ENCODE measurements at regions of chr13 and their contacts with region 1.

Region 1: GRCh38 chr13:43804461-43805070 is 17.8 kb upstream of the ENOX1 start:
- DNase-seq: peak; percentile 55
- ATAC-seq: peak; percentile 67
- H3K4me3 ChIP-seq: peak overlapping the region; percentile 23 to 36
- H3K27ac ChIP-seq: peak overlapping the region; percentile 23; the same call in 1 of the 2 replicates
- H3K4me1 ChIP-seq: peaks cover 6 to 19% of the 10 kb centered on the region in 2 experiments
- H3K27me3 ChIP-seq: no peaks in the 10 kb centered on the region
- CTCF ChIP-seq: peak in 2 of 3 experiments; percentile 46 to 62; a peak in 3 of 6 replicates
- POLR2A ChIP-seq: no peak
- RAD21 ChIP-seq: peak; percentile 65

Region 2: GRCh38 chr13:42594970-42595571 is 1209.5 kb before region 1 on chr13:
- CTCF ChIA-PET with region 1: interaction called, 6 read pairs
- POLR2A ChIA-PET with region 1: no interaction called
- RAD21 ChIA-PET with region 1: no interaction called
- intact Hi-C with region 1: loop called (anchors 1 kb)
- DNase-seq: peak; percentile 51
- ATAC-seq: peak; percentile 82
- H3K4me3 ChIP-seq: no peak overlapping the region
- H3K27ac ChIP-seq: no peak overlapping the region
- H3K4me1 ChIP-seq: no peaks in the 10 kb centered on the region
- H3K27me3 ChIP-seq: peaks cover 45% of the 10 kb centered on the region
- CTCF ChIP-seq: peak; percentile 38 to 90 (median 78); a peak in 5 of 6 replicates
- POLR2A ChIP-seq: no peak
- RAD21 ChIP-seq: peak; percentile 65

Region 3: GRCh38 chr13:42660333-42660965 is 1144.1 kb before region 1 on chr13:
- CTCF ChIA-PET with region 1: interaction called, 3 read pairs
- POLR2A ChIA-PET with region 1: no interaction called
- RAD21 ChIA-PET with region 1: no interaction called
- intact Hi-C with region 1: loop called (anchors 10 kb)
- DNase-seq: no peak
- ATAC-seq: peak; percentile 53; the same call in 1 of the 2 replicates
- H3K4me3 ChIP-seq: no peak overlapping the region
- H3K27ac ChIP-seq: no peak overlapping the region
- H3K4me1 ChIP-seq: no peaks in the 10 kb centered on the region
- H3K27me3 ChIP-seq: peaks cover 57% of the 10 kb centered on the region
- CTCF ChIP-seq: peak in 2 of 3 experiments; percentile 12 to 46; a peak in 2 of 6 replicates
- POLR2A ChIP-seq: no peak
- RAD21 ChIP-seq: peak; percentile 44

Region 4: DNA sequence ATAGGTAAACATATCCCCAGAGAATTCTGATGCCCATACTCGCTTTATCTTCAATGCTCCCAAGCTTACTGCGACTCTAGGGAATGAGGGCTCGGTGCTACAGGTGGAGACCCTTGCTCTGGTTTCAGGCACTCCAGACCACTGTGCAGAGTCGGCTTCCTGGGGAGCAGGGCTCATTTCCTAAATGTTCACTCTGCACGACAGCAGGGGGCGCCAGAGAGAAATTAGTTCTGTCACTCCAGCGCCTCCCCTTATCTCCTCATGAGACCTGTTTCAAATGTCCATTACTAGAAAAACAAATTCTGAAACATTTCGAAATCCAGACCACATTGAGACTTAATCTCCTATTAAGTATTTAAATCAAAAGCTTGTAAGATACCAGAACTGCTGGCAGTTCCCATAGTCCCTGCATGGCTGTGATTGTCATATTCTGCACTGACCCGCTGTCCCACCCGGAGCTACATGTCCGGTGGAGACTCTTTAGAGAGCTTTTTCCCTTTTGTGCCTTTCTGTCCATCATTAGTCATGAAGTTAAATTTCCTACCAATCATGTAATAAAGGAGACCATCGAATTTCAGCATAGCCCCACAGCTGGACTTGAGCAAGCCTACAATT is 834.9 kb before region 1 on chr13:
- CTCF ChIA-PET with region 1: interaction called, 5 read pairs
- POLR2A ChIA-PET with region 1: no interaction called
- RAD21 ChIA-PET with region 1: no interaction called
- intact Hi-C with region 1: loop called (anchors 5 kb)
- DNase-seq: peak; percentile 42
- ATAC-seq: peak; percentile 93
- H3K4me3 ChIP-seq: no peak overlapping the region
- H3K27ac ChIP-seq: no peak overlapping the region
- H3K4me1 ChIP-seq: peaks cover 4 to 12% of the 10 kb centered on the region in 2 experiments; a peak in 3 of 4 replicates
- H3K27me3 ChIP-seq: no peaks in the 10 kb centered on the region
- CTCF ChIP-seq: peak; percentile 68 to 84 (median 83)
- POLR2A ChIP-seq: no peak
- RAD21 ChIP-seq: peak; percentile 57

Region 5: GRCh38 chr13:43085545-43085944 is 719.0 kb before region 1 on chr13:
- CTCF ChIA-PET with region 1: interaction called, 24 read pairs
- POLR2A ChIA-PET with region 1: no interaction called
- RAD21 ChIA-PET with region 1: interaction called, 4 to 5 read pairs
- intact Hi-C with region 1: loop called (anchors 2 kb)
- DNase-seq: peak; percentile 16
- ATAC-seq: 0 out of 2 replicates have a peak, but pooled peaks have one; percentile 34
- H3K4me3 ChIP-seq: no peak overlapping the region
- H3K27ac ChIP-seq: no peak overlapping the region
- H3K4me1 ChIP-seq: no peaks in the 10 kb centered on the region
- H3K27me3 ChIP-seq: no peaks in the 10 kb centered on the region
- CTCF ChIP-seq: peak; percentile 17 to 69 (median 32); a peak in 4 of 6 replicates
- POLR2A ChIP-seq: no peak
- RAD21 ChIP-seq: peak; percentile 51

Region 6: GRCh38 chr13:43303033-43303729 is 501.4 kb before region 1 on chr13:
- CTCF ChIA-PET with region 1: interaction called, 6 read pairs
- POLR2A ChIA-PET with region 1: no interaction called
- RAD21 ChIA-PET with region 1: no interaction called
- intact Hi-C with region 1: loop called (anchors 5 kb)
- DNase-seq: no peak
- ATAC-seq: peak; percentile 86
- H3K4me3 ChIP-seq: no peak overlapping the region
- H3K27ac ChIP-seq: no peak overlapping the region
- H3K4me1 ChIP-seq: no peaks in the 10 kb centered on the region
- H3K27me3 ChIP-seq: no peaks in the 10 kb centered on the region; the same call in 1 of the 2 replicates
- CTCF ChIP-seq: peak; percentile 17 to 51 (median 41); a peak in 4 of 6 replicates
- POLR2A ChIP-seq: no peak
- RAD21 ChIP-seq: peak; percentile 61

Region 7: DNA sequence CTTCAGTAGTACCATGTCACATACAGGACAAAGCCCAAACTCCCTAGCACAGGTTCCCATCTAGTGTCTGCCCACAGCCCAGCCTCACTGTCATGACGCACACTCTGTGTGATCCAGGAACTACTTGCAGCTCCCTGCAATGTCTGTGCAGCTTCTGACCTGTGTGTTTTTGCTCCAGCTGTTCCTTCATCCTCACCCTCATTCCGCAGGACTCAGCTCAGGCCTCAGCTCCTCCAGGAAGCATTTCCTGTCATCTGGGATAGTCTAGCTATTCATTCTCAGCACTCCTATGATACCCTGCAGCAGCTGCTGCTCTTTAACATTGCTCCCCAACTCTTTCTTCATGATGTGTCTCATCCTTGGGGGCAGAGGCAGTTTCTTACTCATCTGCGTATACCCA is 73.9 kb before region 1 on chr13:
- CTCF ChIA-PET with region 1: no interaction called
- POLR2A ChIA-PET with region 1: no interaction called
- RAD21 ChIA-PET with region 1: no interaction called
- intact Hi-C with region 1: no loop called
- DNase-seq: no peak
- ATAC-seq: no peak
- H3K4me3 ChIP-seq: no peak overlapping the region
- H3K27ac ChIP-seq: no peak overlapping the region
- H3K4me1 ChIP-seq: no peaks in the 10 kb centered on the region
- H3K27me3 ChIP-seq: peaks cover 16% of the 10 kb centered on the region
- CTCF ChIP-seq: no peak
- POLR2A ChIP-seq: no peak
- RAD21 ChIP-seq: no peak

Region 8: GRCh38 chr13:43815204-43815603 is 10.6 kb after region 1 on chr13:
- CTCF ChIA-PET with region 1: interaction called, 14 read pairs
- POLR2A ChIA-PET with region 1: no interaction called
- RAD21 ChIA-PET with region 1: no interaction called
- intact Hi-C with region 1: no loop called
- DNase-seq: no peak
- ATAC-seq: peak; percentile 91
- H3K4me3 ChIP-seq: no peak overlapping the region
- H3K27ac ChIP-seq: peak overlapping the region; percentile 44; the same call in 1 of the 2 replicates
- H3K4me1 ChIP-seq: peaks cover 11 to 21% of the 10 kb centered on the region in 2 experiments
- H3K27me3 ChIP-seq: no peaks in the 10 kb centered on the region
- CTCF ChIP-seq: no peak
- POLR2A ChIP-seq: no peak
- RAD21 ChIP-seq: no peak